T-cell (primary cell): ENCODE measurements at regions of chr12 and their contacts with region 1.

Region 1: DNA sequence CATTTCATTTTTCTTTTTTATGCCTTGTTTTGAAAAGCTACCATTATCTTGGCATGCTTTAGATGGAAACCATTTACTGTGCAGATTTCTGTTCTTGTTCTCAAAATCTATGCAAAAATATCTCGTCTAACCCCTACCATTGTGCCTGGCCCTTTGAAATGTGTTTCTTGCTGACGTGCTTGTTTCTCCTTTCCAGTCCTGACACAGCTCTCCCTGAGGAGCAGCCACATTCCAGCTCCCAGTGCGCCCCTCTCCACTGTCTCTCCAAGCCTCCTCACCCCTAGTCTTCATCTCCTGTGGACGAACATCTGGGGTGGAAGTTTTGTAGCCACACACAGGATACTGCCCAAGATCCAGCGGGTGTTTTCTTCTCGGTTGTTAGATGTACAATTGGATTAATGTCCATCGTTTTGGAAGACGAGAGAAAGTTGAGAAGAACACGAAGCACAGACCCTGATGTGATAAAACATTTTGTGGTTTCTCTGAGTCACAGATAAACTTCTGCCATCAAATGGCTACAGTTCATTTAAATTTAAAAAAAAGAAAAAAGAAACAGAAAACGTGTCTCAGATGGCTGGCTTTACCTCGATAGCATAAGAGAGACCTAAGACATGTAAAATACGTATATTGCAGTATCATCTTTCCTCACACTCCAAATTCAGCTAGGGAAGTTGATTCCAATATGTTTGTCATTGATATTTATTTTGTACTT is 21.9 kb upstream of the FGD4 start:
- DNase-seq: no peak
- ATAC-seq: no peak
- H3K4me3 ChIP-seq: no peak overlapping the region
- H3K4me3 Mint-ChIP-seq: no peak overlapping the region
- H3K27ac ChIP-seq: no peak overlapping the region
- H3K27ac Mint-ChIP-seq: no peak overlapping the region
- H3K4me1 ChIP-seq: no peaks in the 10 kb centered on the region
- H3K4me1 Mint-ChIP-seq: no peaks in the 10 kb centered on the region
- H3K27me3 ChIP-seq: no peaks in the 10 kb centered on the region
- H3K27me3 Mint-ChIP-seq: peaks cover 0 to 4% of the 10 kb centered on the region in 2 donors

Region 2: DNA sequence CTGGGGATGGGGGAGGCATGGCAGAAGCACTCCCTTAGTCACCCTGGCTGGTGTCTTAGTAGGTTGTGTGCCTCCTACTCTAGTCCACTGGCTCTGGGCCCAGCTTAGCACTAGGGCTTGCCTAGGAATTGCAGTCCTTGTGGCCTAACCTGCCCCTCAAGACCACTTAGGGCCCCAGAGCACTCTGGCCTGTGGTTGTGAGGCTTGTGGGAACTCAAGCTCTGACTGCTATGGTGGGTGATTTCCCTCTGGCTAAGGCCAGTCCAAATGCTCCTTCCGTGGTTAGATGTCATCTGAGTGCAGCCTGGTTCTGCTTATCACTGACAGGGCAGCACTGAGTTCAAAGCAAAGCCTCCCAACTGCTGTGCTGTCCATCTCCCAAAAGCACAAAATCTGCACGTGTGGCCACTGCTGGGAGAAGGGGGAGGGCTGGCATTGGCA is 42.0 kb after region 1 on chr12:
- CTCF ChIA-PET with region 1: no interaction called
- POLR2A ChIA-PET with region 1: interaction called in 1 of 2 experiments, 11 read pairs
- DNase-seq: no peak
- ATAC-seq: no peak
- H3K4me3 ChIP-seq: no peak overlapping the region
- H3K4me3 Mint-ChIP-seq: no peak overlapping the region
- H3K27ac ChIP-seq: no peak overlapping the region
- H3K27ac Mint-ChIP-seq: no peak overlapping the region
- H3K4me1 ChIP-seq: no peaks in the 10 kb centered on the region
- H3K4me1 Mint-ChIP-seq: no peaks in the 10 kb centered on the region
- H3K27me3 ChIP-seq: peaks cover 0 to 10% of the 10 kb centered on the region in 2 experiments
- H3K27me3 Mint-ChIP-seq: peaks cover 6 to 7% of the 10 kb centered on the region in 2 donors

Region 3: DNA sequence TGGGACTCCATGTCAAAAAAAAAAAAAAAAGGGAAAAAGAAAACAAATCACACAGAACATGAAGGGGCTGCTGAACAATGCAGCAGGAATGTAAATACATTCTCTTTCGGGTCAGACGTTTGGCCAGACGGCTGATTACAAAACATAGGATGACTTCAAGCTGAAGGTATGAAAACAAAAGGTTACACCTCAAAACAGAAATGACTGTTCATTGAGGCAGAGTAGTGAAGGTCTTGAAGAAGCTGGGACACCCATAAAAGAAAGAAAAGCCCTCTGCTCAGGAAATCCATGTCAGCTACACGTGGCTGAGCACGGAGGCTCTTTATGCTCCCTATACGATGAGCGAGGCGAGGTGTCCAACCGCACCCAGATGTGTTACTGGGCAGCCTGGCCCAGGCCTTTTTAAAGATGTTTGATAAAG is 59.6 kb after region 1 on chr12:
- CTCF ChIA-PET with region 1: no interaction called
- POLR2A ChIA-PET with region 1: no interaction called
- DNase-seq: no peak
- ATAC-seq: no peak
- H3K4me3 ChIP-seq: no peak overlapping the region
- H3K4me3 Mint-ChIP-seq: no peak overlapping the region
- H3K27ac ChIP-seq: no peak overlapping the region
- H3K27ac Mint-ChIP-seq: no peak overlapping the region
- H3K4me1 ChIP-seq: no peaks in the 10 kb centered on the region
- H3K4me1 Mint-ChIP-seq: no peaks in the 10 kb centered on the region
- H3K27me3 ChIP-seq: peaks cover 0 to 5% of the 10 kb centered on the region in 2 experiments
- H3K27me3 Mint-ChIP-seq: peaks cover 3% of the 10 kb centered on the region in 2 donors

Region 4: GRCh38 chr12:32568241-32568640 is 190.7 kb after region 1 on chr12:
- CTCF ChIA-PET with region 1: no interaction called
- POLR2A ChIA-PET with region 1: no interaction called
- DNase-seq: no peak
- ATAC-seq: no peak
- H3K4me3 ChIP-seq: no peak overlapping the region
- H3K4me3 Mint-ChIP-seq: no peak overlapping the region
- H3K27ac ChIP-seq: no peak overlapping the region
- H3K27ac Mint-ChIP-seq: no peak overlapping the region
- H3K4me1 ChIP-seq: no peaks in the 10 kb centered on the region
- H3K4me1 Mint-ChIP-seq: no peaks in the 10 kb centered on the region
- H3K27me3 ChIP-seq: no peaks in the 10 kb centered on the region
- H3K27me3 Mint-ChIP-seq: no peaks in the 10 kb centered on the region

Region 5: DNA sequence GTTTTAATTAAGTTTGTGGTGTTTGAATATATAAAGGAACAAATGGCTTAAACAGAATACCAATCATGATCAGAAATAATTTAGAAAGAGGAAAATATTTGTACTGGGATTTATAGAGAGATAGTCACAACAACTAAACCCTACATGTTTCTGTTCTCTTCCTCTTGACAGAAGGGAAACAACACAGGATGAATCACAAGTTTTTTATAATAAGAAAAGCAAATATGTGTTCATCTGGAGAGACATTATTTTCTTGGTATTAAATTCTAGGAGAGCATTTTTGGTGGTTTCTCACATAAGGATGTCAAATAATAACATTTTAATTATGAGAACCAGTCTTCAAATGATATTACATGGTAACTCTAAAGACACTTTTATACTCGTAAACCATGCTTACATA is 752.0 kb after region 1 on chr12:
- CTCF ChIA-PET with region 1: no interaction called
- POLR2A ChIA-PET with region 1: no interaction called
- DNase-seq: no peak
- ATAC-seq: no peak
- H3K4me3 ChIP-seq: no peak overlapping the region
- H3K4me3 Mint-ChIP-seq: no peak overlapping the region
- H3K27ac ChIP-seq: no peak overlapping the region
- H3K27ac Mint-ChIP-seq: no peak overlapping the region
- H3K4me1 ChIP-seq: no peaks in the 10 kb centered on the region
- H3K4me1 Mint-ChIP-seq: no peaks in the 10 kb centered on the region
- H3K27me3 ChIP-seq: no peaks in the 10 kb centered on the region
- H3K27me3 Mint-ChIP-seq: no peaks in the 10 kb centered on the region